Activated T-helper 1 cell treated with anti-CD3 and anti-CD28 coated beads, Interleukin-12 subunit alpha, Interleukin-12 subunit beta, Interleukin-2, Interleukin-4 antibody, amounts not matched to agents 30 ng/mL and 10 ng/mL and 1 ng/mL, durations not matched to agents 14 hours and 24 hours and 36 hours (primary cell): ENCODE measurements at regions of chr2 and their contacts with region 1.

Region 1: DNA sequence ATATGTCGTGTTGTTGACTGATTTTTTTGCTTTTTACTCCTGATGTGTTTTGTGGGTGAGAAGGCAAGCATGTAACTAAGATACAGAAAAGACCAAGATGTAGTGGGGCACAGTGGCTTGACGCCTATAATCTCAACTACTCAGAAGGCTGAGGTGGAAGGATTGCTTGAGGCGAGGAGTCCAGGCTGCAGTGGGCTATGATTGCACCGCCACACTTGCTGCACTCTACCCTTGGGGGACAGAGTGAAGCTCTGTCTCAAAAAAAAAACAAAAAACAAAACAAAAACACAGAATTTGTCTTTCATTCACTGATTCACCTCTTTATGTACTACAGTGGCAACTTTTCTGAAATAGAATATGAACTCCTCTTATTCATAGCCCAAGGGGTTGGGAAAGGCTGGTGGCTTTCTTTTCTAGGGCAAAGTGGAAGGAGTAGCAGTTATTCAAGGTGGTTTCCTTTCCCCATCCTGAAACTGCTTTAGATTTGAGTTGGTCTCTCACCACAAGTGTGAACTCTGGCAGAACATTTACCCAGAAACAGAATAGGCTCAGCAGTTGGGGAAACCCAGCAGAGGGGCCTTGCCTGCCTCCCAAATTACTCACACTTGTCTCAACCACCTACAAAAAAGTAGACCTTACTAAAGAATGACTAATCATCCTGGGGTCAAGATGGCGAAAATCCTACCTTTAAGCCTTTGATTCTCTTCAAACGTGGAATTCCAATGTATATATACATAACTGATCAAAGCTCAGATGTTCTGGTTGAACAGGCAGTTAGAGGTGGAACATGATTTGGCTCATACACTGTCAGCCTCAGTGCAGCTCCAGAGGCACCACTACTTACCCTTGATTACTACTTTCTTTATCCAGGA is 6.5 kb downstream of the TANK start:
- DNase-seq: peak; percentile 74
- H3K4me3 Mint-ChIP-seq: peak overlapping the region; percentile 75
- H3K27ac Mint-ChIP-seq: peak overlapping the region; percentile 94
- H3K4me1 Mint-ChIP-seq: peaks cover 100% of the 10 kb centered on the region
- H3K27me3 Mint-ChIP-seq: no peaks in the 10 kb centered on the region

Region 2: GRCh38 chr2:160241251-160242137 is 925.3 kb before region 1 on chr2:
- intact Hi-C with region 1: no loop called
- DNase-seq: no peak
- H3K4me3 Mint-ChIP-seq: no peak overlapping the region
- H3K27ac Mint-ChIP-seq: no peak overlapping the region
- H3K4me1 Mint-ChIP-seq: no peaks in the 10 kb centered on the region
- H3K27me3 Mint-ChIP-seq: peaks cover 11% of the 10 kb centered on the region

Region 3: GRCh38 chr2:160666154-160667060 is 500.4 kb before region 1 on chr2:
- intact Hi-C with region 1: loop called (anchors 5 kb)
- DNase-seq: no peak
- H3K4me3 Mint-ChIP-seq: no peak overlapping the region
- H3K27ac Mint-ChIP-seq: peak overlapping the region; percentile 36
- H3K4me1 Mint-ChIP-seq: peaks cover 21% of the 10 kb centered on the region
- H3K27me3 Mint-ChIP-seq: no peaks in the 10 kb centered on the region

Region 4: DNA sequence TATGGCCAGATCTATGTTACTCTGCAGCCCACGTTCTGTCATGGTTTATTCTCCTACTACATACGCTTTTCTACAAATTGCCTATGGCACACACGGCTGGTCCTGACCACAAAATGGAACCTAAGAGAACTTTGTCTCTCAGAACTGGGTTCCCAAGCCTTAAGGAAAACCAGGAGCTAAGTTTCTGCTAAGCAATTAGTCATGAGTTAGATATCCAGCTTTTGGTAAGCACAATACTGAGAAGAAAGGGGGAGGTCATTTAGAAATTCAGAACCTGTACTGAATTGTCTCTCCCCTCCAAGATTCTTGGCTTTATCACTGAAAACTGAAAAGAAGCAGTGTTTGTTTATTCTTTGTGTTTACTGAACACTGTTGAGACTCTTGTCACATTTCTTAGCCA is 290.0 kb before region 1 on chr2:
- intact Hi-C with region 1: no loop called
- DNase-seq: no peak
- H3K4me3 Mint-ChIP-seq: no peak overlapping the region
- H3K27ac Mint-ChIP-seq: no peak overlapping the region
- H3K4me1 Mint-ChIP-seq: no peaks in the 10 kb centered on the region
- H3K27me3 Mint-ChIP-seq: no peaks in the 10 kb centered on the region

Region 5: GRCh38 chr2:161146996-161147395 is 19.8 kb before region 1 on chr2:
- intact Hi-C with region 1: loop called (anchors 1 kb)
- DNase-seq: no peak
- H3K4me3 Mint-ChIP-seq: no peak overlapping the region
- H3K27ac Mint-ChIP-seq: peak overlapping the region; percentile 72
- H3K4me1 Mint-ChIP-seq: peaks cover 80% of the 10 kb centered on the region
- H3K27me3 Mint-ChIP-seq: no peaks in the 10 kb centered on the region